ENCODE measurements at regions of chr10 and their contacts with region 1.

Region 1: GRCh38 chr10:43204943-43205671 is 61.8 kb downstream of the RASGEF1A start:
- DNase-seq: peak; percentile 36
- H3K4me3 Mint-ChIP-seq: no peak overlapping the region
- H3K27ac Mint-ChIP-seq: no peak overlapping the region
- H3K4me1 Mint-ChIP-seq: no peaks in the 10 kb centered on the region
- H3K27me3 Mint-ChIP-seq: no peaks in the 10 kb centered on the region

Region 2: DNA sequence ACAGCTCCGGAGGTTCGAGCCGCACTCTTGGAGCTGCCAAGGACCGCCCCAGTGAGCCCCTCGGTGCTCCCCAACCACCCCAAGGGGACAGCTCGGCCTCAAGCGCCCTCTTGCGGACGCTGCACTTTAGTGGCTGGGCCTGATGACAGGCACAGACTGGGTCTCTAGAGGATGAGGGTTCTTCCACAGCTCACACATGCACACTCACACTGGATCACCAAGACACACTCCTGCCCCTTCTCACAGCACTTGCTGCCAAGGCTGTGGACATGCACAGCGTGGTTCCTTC is 126.2 kb before region 1 on chr10:
- intact Hi-C with region 1: loop called (anchors 5 kb)
- DNase-seq: no peak
- H3K4me3 Mint-ChIP-seq: peak overlapping the region; percentile 30
- H3K27ac Mint-ChIP-seq: no peak overlapping the region
- H3K4me1 Mint-ChIP-seq: peaks cover 11% of the 10 kb centered on the region
- H3K27me3 Mint-ChIP-seq: peaks cover 33% of the 10 kb centered on the region

Region 3: GRCh38 chr10:43120929-43121314 is 84.2 kb before region 1 on chr10:
- intact Hi-C with region 1: loop called (anchors 5 kb)
- DNase-seq: peak; percentile 82
- H3K4me3 Mint-ChIP-seq: peak overlapping the region; percentile 54
- H3K27ac Mint-ChIP-seq: peak overlapping the region; percentile 90
- H3K4me1 Mint-ChIP-seq: peaks cover 65% of the 10 kb centered on the region
- H3K27me3 Mint-ChIP-seq: no peaks in the 10 kb centered on the region

Region 4: DNA sequence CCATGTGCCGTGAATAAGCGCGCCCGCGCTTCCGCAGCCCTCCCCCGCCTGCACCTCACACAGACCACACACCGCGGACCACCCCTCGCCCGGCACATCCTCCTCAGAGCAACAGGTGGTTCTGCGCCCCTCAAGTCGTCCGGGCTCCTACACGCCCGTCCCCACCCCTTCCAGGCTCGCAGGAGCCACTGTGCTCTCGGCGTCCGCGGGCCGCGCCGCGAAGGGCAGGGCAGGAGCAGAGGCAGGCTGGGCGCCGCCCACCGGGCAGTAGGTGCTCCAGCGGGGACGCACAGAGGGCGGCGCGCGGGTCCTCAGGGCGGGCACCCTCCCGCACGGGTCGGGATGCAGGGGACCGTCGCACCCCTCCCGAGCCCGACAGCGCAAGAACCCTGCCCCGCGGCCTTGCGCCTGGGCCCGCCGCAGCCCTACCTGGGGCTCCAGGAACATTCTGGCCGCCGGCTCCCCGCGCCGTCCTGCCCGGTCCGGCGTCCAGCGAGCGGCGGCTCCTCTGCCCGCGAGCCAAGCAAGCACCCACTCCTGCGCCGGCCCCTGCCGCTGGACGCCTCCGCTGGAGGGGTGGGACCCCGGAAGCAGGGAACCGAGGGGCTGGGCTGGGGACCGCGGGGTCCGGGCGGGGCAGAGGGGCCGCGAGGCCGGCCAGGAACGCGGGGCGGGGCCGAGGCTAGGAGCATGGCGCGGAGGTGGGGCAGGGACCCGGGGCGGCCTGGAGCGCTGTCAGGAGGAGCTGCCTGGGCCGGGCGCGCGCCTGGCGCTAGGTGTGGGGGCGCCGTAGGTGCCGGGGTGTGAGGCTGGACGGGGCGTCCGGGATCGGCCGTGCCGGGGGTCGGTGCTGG is 24.3 kb after region 1 on chr10:
- intact Hi-C with region 1: loop called (anchors 2 kb)
- DNase-seq: peak; percentile 19
- H3K4me3 Mint-ChIP-seq: peak overlapping the region; percentile 69
- H3K27ac Mint-ChIP-seq: no peak overlapping the region
- H3K4me1 Mint-ChIP-seq: peaks cover 21% of the 10 kb centered on the region
- H3K27me3 Mint-ChIP-seq: peaks cover 48% of the 10 kb centered on the region